CD4-positive, alpha-beta memory T cell (primary cell): ENCODE measurements at regions of chr6 and their contacts with region 1.

Region 1: DNA sequence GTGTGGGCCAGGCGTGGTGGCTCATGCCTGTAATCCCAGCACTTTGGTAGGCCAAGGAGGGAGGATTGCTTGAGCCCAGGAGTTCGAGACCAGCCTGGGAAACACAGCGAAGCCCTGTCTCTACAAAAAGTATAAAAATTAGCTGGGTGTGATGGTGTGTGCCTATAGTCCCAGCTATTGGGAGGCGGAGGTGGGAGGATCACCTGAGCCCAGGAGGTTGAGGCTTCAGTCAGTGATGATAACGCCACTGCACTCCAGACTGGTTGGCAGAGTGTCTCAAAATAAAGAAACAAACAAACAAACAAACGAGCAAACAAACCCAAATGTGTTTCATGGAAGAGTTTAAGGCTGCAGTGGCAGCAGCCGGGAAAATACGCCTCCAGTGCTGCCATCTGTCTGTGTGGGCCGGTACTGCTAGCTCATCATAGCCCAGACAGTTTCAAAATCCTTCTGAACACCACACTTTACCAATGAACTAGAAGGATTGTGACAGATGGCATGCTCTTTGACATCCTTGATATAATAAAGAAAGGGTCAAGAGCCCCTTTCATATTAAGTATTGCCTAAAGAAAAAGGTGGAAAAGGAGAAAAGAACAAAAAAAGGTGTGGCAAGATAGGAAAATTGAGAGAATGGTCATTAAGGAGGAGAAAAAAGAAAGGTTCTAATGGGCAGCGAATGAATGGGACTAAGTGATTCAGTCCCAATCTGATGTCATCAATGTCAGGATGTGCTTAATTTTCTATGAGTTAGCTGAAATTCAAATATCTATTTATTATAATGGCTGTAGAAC is 298.6 kb downstream of the SYNE1 start:
- DNase-seq: peak in 4 of 5 donors; percentile 44 to 62 (median 52)
- H3K4me3 ChIP-seq: no peak overlapping the region
- H3K4me3 Mint-ChIP-seq: peak overlapping the region in 1 of 8 donors; percentile 45
- H3K27ac ChIP-seq: no peak overlapping the region
- H3K27ac Mint-ChIP-seq: no peak overlapping the region
- H3K4me1 ChIP-seq: no peaks in the 10 kb centered on the region
- H3K4me1 Mint-ChIP-seq: peaks cover 0 to 2% (median 0%) of the 10 kb centered on the region in 4 donors
- H3K27me3 ChIP-seq: no peaks in the 10 kb centered on the region
- H3K27me3 Mint-ChIP-seq: no peaks in the 10 kb centered on the region

Region 2: GRCh38 chr6:151690768-151691562 is 647.6 kb before region 1 on chr6:
- CTCF ChIA-PET with region 1: interaction called, 13 read pairs
- POLR2A ChIA-PET with region 1: interaction called, 3 read pairs
- intact Hi-C with region 1: loop called (anchors 1 kb)
- DNase-seq: peak in 4 of 5 donors; percentile 33 to 48 (median 36)
- H3K4me3 ChIP-seq: peak overlapping the region; percentile 24 to 46
- H3K4me3 Mint-ChIP-seq: peak overlapping the region; percentile 74 to 89 (median 86)
- H3K27ac ChIP-seq: peak overlapping the region; percentile 37
- H3K27ac Mint-ChIP-seq: peak overlapping the region; percentile 76 to 90 (median 81)
- H3K4me1 ChIP-seq: peaks cover 11% of the 10 kb centered on the region
- H3K4me1 Mint-ChIP-seq: peaks cover 9 to 27% (median 24%) of the 10 kb centered on the region in 4 donors
- H3K27me3 ChIP-seq: no peaks in the 10 kb centered on the region
- H3K27me3 Mint-ChIP-seq: no peaks in the 10 kb centered on the region

Region 3: DNA sequence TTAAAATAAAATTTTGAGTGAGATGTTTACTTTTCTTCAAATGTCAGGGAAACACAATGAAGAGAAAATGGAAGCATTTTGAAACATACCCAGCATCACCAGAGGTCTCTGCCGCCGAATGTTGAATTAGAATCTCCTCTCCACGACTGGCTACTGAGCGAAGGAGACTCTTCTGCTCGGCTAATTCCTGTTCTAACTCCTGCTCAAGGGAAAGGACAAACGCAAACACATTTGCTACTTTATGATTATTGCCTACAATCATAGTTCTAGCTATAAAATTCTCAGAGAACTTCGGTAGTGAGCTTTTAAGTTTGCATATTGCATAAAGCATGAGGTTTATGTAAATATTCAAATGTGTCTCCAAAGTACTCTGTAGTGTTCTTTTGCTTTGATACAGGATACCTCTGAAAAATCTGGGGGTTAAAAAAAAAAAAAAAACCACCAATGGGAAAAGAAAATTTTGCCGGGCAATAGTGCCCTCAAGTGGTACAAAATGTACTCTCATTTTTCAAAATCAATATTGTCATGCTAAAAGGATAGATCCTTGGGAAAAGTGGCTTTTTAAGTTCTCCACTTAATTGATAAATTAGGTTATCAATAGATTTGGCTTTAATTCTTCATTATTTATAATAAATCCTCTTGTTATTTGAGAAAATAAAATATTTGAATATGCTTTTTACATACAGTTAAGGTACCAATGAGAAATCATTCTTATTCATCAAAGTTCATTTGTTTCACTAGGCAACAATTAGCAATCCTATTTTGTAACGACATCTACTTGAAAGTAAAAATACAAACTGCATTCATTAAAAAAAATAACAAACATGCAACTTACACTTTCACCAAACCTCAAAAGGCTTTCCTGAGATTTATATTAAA is 70.3 kb before region 1 on chr6:
- CTCF ChIA-PET with region 1: interaction called, 20 read pairs
- POLR2A ChIA-PET with region 1: no interaction called
- intact Hi-C with region 1: loop called (anchors 1 kb)
- DNase-seq: peak in 4 of 5 donors; percentile 17 to 40 (median 24)
- H3K4me3 ChIP-seq: no peak overlapping the region
- H3K4me3 Mint-ChIP-seq: no peak overlapping the region
- H3K27ac ChIP-seq: no peak overlapping the region
- H3K27ac Mint-ChIP-seq: no peak overlapping the region
- H3K4me1 ChIP-seq: no peaks in the 10 kb centered on the region
- H3K4me1 Mint-ChIP-seq: peaks cover 0 to 2% (median 0%) of the 10 kb centered on the region in 4 donors
- H3K27me3 ChIP-seq: no peaks in the 10 kb centered on the region
- H3K27me3 Mint-ChIP-seq: no peaks in the 10 kb centered on the region

Region 4: GRCh38 chr6:152293404-152293803 is 45.1 kb before region 1 on chr6:
- CTCF ChIA-PET with region 1: interaction called, 187 read pairs
- POLR2A ChIA-PET with region 1: no interaction called
- intact Hi-C with region 1: no loop called
- DNase-seq: no peak
- H3K4me3 ChIP-seq: no peak overlapping the region
- H3K4me3 Mint-ChIP-seq: no peak overlapping the region
- H3K27ac ChIP-seq: no peak overlapping the region
- H3K27ac Mint-ChIP-seq: peak overlapping the region in 1 of 7 donors; percentile 22
- H3K4me1 ChIP-seq: peaks cover 14% of the 10 kb centered on the region
- H3K4me1 Mint-ChIP-seq: peaks cover 23 to 34% (median 27%) of the 10 kb centered on the region in 4 donors
- H3K27me3 ChIP-seq: no peaks in the 10 kb centered on the region
- H3K27me3 Mint-ChIP-seq: no peaks in the 10 kb centered on the region

Region 5: GRCh38 chr6:152309648-152310047 is 28.9 kb before region 1 on chr6:
- CTCF ChIA-PET with region 1: interaction called, 37 read pairs
- POLR2A ChIA-PET with region 1: interaction called, 5 read pairs
- intact Hi-C with region 1: loop called (anchors 1 kb)
- DNase-seq: peak; percentile 65 to 84 (median 77)
- H3K4me3 ChIP-seq: no peak overlapping the region
- H3K4me3 Mint-ChIP-seq: peak overlapping the region in 3 of 8 donors; percentile 10 to 38 (median 30)
- H3K27ac ChIP-seq: no peak overlapping the region
- H3K27ac Mint-ChIP-seq: peak overlapping the region in 2 of 7 donors; percentile 47 to 83
- H3K4me1 ChIP-seq: peaks cover 31% of the 10 kb centered on the region
- H3K4me1 Mint-ChIP-seq: peaks cover 17 to 32% (median 27%) of the 10 kb centered on the region in 4 donors
- H3K27me3 ChIP-seq: no peaks in the 10 kb centered on the region
- H3K27me3 Mint-ChIP-seq: no peaks in the 10 kb centered on the region

Region 6: DNA sequence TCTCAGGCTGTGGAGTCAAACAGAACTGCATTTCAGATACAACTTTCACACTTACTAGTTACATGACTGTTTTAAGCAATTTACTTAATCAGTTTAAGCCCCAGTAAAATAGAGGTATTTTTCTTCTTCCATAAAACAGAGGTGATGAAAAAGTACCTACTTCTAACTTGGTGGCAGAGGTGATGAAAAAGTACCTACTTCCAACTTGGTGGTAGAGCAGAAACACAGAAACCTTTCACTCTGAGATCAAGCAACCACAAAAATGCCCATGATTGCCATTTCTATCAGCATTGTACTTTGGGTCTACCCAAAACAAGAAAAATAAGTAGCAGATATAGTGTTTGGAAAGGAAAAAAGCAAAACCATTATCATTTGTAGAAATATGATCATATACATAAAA is 1849.2 kb after region 1 on chr6:
- CTCF ChIA-PET with region 1: no interaction called
- POLR2A ChIA-PET with region 1: no interaction called
- intact Hi-C with region 1: no loop called
- DNase-seq: no peak
- H3K4me3 ChIP-seq: no peak overlapping the region
- H3K4me3 Mint-ChIP-seq: no peak overlapping the region
- H3K27ac ChIP-seq: no peak overlapping the region
- H3K27ac Mint-ChIP-seq: peak overlapping the region in 2 of 7 donors; percentile 53 to 66
- H3K4me1 ChIP-seq: no peaks in the 10 kb centered on the region
- H3K4me1 Mint-ChIP-seq: peaks cover 27 to 57% (median 42%) of the 10 kb centered on the region in 4 donors
- H3K27me3 ChIP-seq: no peaks in the 10 kb centered on the region
- H3K27me3 Mint-ChIP-seq: no peaks in the 10 kb centered on the region